ENCODE measurements at regions of chr11 and their contacts with region 1.

Region 1: GRCh38 chr11:113274713-113275582 is 39.4 kb upstream of the TTC12 start:
- DNase-seq: no peak
- H3K4me3 ChIP-seq: no peak overlapping the region
- H3K27ac ChIP-seq: no peak overlapping the region
- H3K4me1 ChIP-seq: no peaks in the 10 kb centered on the region
- H3K27me3 ChIP-seq: 0 out of 2 replicates have a peak, but pooled peaks cover 12% of the 10 kb centered on the region
- CTCF ChIP-seq: peak; percentile 33; the same call in 1 of the 2 replicates

Region 2: DNA sequence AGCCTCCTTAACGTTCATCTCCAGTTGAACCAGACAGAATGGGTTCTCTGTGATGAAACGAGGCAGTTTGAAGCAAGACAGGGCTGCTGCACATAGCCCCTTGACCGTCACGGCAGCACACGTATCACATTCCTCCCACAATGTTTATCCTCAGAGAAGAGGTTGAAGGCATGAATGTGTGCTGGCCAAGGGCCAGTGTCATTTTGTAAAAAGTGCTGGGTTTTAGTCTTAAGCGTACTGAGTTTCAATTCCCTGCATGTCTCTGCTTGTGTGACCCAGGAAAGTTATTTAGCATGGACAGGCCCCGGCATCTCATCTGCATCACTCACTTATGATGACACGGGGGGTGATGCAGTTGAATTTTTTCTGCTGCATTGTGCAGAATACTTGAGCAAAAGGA is 71.0 kb after region 1 on chr11:
- CTCF ChIA-PET with region 1: interaction called, 13 read pairs
- POLR2A ChIA-PET with region 1: no interaction called
- intact Hi-C with region 1: no loop called
- DNase-seq: no peak
- H3K4me3 ChIP-seq: no peak overlapping the region
- H3K27ac ChIP-seq: no peak overlapping the region
- H3K4me1 ChIP-seq: no peaks in the 10 kb centered on the region
- H3K27me3 ChIP-seq: no peaks in the 10 kb centered on the region
- CTCF ChIP-seq: no peak

Region 3: GRCh38 chr11:113519989-113520613 is 245.2 kb after region 1 on chr11:
- CTCF ChIA-PET with region 1: no interaction called
- POLR2A ChIA-PET with region 1: no interaction called
- intact Hi-C with region 1: no loop called
- DNase-seq: no peak
- H3K4me3 ChIP-seq: no peak overlapping the region
- H3K27ac ChIP-seq: no peak overlapping the region
- H3K4me1 ChIP-seq: no peaks in the 10 kb centered on the region
- H3K27me3 ChIP-seq: peaks cover 22% of the 10 kb centered on the region
- CTCF ChIP-seq: no peak